ENCODE measurements at regions of chr1 and their contacts with region 1.

Region 1: DNA sequence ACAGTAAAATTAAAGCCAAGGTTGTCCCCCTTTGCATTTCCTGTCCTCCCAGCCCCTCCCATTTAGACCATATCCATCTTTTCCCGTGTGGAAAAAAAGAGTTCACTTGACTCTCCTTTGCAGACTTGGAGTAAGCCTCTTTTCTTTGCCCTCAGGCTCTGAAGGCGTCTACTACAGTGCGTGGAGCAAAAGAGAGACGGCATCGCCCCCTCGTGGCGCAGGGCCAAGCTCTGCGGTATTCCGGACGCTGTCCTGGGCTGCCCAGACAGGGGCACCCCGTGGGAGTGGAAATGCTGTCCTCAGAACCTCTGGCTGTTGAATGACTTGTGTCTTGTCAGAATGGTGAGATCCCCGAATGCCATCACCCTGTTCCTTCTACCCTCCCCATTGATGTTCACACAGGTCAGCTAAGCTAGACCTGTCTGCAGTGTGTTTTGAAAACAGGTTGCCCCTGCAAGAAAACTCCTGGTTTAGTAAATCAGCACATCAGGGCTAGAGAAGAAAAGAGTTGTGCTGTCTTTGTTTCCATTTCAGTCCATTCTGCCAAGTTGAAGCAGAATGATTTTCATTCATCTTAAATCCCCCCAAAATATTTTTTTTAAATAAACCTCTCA is 12.3 kb upstream of the GJA8 start:
- DNase-seq: no peak
- ATAC-seq: peak; percentile 89

Region 2: DNA sequence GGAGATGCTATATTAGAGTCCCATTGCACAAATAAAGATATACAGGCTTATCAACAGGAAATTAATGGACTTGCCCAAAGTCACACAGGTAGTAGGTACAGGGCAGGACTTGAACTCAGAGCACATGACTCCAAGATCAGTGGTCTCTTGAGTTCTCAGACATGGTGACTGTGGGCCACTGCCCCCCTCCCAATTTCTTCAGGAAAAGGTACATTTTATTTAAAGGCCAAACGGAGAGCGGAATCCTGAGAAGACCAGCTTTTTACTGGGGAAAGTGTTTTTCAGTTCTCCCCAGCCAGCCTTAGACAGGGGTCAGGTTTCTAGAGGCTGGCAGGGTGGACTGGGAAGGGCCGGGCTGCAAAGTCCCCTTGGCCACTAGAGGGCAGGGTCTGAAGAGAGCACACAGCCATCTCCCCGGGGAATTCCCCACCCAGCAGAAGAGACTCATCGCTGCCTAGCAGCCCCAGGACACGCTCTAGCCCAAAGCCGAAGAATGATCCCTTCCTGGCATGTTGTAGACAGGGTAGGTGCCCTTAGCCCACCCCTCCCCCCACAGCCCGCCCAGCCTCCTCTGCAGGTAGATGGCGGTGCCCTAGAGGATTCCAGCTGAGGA is 249.6 kb before region 1 on chr1:
- intact Hi-C with region 1: loop called (anchors 1 kb)
- DNase-seq: peak; percentile 77
- ATAC-seq: peak; percentile 91

Region 3: DNA sequence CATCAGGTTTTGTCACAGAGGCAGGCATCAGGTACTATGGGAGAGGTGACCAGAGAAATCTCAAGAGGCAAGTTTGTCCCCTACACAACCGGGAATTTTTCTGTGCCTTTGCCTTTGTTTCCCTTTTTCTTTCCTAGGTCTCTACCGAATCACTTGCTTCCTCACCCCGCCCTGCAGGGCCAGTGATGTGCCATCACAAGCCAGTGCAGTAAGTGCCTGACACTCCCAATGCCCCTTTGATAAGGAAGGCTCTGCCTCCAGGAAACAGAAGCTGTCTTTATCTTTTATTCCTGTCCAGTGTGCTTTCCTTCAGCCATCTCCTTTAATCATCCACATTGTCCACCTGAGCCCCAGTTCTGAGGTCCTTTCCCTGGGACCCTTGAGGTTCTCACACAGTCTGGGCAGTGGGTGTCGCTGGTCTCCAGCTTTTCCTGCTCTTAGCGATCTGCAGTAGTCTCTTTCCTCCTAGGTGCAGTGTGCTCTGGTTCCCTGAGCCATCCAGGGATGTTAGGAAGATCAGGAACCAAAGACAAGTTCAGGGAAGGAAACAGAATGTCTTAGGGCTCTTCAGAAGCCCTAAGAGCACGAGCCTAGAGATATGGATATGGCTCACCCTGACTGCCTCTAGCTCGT is 166.5 kb before region 1 on chr1:
- intact Hi-C with region 1: loop called (anchors 1 kb)
- DNase-seq: no peak
- ATAC-seq: peak; percentile 82

Region 4: DNA sequence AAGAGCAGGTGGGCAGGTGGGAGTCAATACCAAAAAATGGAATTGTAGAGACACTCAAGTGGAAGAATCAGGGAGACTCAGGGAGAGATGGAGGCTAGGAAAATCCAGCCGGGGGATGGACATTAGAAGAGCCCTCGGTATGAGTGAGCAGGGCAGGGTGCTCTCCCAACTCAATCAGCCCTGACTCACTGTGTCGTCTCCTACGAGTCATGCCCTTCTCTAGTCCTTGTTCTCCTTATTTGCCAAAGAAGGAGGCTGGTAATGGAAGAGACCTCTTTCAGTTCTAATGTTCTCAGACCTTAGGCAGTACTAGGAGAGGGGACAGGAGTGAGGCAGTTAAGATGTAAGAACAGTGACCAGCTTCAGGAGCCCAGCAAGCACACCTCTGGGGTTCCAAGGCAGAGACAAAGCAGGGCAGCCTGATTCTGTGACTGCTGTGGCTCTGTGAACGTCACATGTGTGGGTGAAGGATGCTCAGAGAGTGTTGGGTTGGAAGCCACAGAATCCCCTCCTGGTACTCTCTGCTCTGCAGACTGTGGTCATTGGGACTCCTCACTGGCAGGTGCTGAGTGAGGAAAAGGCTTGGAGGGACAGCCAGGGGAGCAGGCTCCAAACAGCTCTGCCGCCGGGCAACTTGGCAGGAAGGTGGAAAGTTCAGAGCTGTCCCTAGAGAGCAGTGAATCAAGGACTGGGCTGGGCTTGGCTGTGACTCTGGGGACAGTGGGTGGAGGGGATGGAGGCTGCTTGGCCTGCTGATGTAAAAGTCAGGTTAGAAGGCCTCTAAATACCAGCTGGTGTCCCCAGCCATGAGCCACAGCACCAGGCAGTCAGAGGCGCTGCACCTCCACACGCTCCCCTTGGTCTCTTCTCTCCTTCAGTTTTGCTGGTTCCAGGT is 118.8 kb before region 1 on chr1:
- intact Hi-C with region 1: loop called (anchors 5 kb)
- DNase-seq: peak; percentile 79
- ATAC-seq: peak; percentile 96

Region 5: DNA sequence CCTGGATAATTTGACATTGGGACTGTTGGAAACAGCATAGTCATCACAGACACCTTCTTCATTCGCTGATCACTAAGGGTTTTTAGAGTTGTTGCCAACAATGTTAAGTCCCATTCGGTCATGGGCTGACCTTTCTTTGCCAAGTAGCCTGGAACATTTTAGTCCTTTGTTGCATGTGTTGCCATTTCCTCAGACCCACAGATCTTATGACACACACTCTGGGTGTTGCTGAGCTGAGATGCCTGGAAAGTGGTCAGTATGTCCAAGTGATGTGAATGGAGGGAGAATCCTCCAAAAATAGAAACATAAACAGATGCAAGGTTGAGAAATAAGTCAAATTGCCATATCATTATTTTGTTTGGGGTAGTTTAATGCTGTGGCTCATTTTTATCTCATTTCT is 68.4 kb before region 1 on chr1:
- intact Hi-C with region 1: loop called (anchors 5 kb)
- DNase-seq: no peak
- ATAC-seq: peak; percentile 96